AG04450 (cell line): ENCODE measurements at regions of chr9 and their contacts with region 1.

Region 1: DNA sequence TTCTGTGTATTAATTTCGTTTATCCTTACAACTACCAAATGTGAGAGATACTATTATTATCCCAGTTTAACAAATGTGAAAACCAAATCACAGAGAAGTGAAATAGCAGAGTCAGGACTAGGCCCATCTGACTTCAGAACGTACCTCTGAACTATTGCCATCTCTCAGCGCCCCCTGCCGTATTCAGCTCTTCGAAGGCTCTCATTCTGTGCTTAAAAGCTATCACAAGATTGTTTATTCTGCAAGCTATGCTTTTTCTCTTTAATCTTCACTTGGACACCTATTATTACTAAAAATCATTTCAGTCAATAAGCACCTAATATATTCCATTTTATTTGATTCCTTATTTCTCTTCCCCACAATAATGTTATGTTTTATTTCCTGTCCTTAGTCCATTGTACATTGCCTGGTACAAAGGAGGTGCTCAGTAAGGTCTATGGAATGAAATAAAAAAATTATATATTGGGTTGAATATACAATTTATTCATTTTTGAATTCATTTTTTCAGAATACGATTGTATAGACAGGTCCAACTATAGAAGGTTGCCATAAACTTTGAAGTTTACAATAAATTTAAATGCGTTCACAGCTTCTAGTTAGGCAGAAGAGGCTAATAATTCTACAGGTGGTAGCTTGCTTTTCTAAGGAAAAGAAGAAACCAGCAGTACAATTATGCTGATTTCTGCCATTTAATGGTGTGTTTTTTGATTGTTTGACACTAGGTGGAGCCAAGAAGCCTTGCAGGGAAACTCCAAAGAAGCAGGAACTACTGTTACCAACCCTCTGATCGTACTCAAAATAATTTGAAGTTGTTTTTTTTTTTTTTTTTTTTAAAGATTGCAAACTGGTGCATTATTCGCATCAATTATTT is 202.2 kb upstream of the DMRTA1 start:
- DNase-seq: no peak
- H3K4me3 ChIP-seq: no peak overlapping the region
- H3K27ac ChIP-seq: no peak overlapping the region
- H3K27me3 ChIP-seq: no peaks in the 10 kb centered on the region
- CTCF ChIP-seq: peak; percentile 74

Region 2: GRCh38 chr9:21968331-21969010 is 275.9 kb before region 1 on chr9:
- CTCF ChIA-PET with region 1: interaction called, 11 read pairs
- POLR2A ChIA-PET with region 1: no interaction called
- DNase-seq: no peak
- H3K4me3 ChIP-seq: 0 out of 2 replicates have a peak overlapping the region, but pooled peaks have one; percentile 25
- H3K27ac ChIP-seq: no peak overlapping the region
- H3K27me3 ChIP-seq: peaks cover 57% of the 10 kb centered on the region
- CTCF ChIP-seq: no peak

Region 3: GRCh38 chr9:22030101-22030598 is 214.2 kb before region 1 on chr9:
- CTCF ChIA-PET with region 1: interaction called, 19 read pairs
- POLR2A ChIA-PET with region 1: no interaction called
- DNase-seq: no peak
- H3K4me3 ChIP-seq: no peak overlapping the region
- H3K27ac ChIP-seq: peak overlapping the region; percentile 11
- H3K27me3 ChIP-seq: no peaks in the 10 kb centered on the region
- CTCF ChIP-seq: no peak

Region 4: GRCh38 chr9:22105005-22105722 is 139.2 kb before region 1 on chr9:
- CTCF ChIA-PET with region 1: interaction called, 11 read pairs
- POLR2A ChIA-PET with region 1: no interaction called
- DNase-seq: no peak
- H3K4me3 ChIP-seq: no peak overlapping the region
- H3K27ac ChIP-seq: no peak overlapping the region
- H3K27me3 ChIP-seq: no peaks in the 10 kb centered on the region
- CTCF ChIP-seq: no peak

Region 5: DNA sequence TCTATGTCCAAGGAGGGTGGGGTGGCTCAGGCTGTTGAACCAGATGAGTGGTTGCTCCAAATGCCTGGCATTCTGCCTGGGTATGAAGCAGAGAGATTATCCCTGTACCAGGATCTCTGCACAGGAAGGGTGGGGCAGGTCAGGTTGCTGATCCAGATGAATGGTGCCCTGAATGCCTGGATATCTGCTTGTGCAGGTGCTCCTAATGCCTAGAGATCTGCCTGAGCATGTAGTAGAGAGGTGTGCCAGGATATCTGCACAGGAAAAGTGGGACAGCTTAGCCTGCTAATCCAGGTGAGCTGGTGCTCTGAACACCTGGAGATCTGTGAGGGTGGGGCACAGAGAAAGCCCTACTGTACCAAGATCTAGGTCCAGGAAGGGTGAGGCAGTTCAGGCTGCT is 12.7 kb after region 1 on chr9:
- CTCF ChIA-PET with region 1: interaction called, 12 read pairs
- POLR2A ChIA-PET with region 1: no interaction called
- DNase-seq: no peak
- H3K4me3 ChIP-seq: no peak overlapping the region
- H3K27ac ChIP-seq: no peak overlapping the region
- H3K27me3 ChIP-seq: peaks cover 4% of the 10 kb centered on the region
- CTCF ChIP-seq: no peak

Region 6: DNA sequence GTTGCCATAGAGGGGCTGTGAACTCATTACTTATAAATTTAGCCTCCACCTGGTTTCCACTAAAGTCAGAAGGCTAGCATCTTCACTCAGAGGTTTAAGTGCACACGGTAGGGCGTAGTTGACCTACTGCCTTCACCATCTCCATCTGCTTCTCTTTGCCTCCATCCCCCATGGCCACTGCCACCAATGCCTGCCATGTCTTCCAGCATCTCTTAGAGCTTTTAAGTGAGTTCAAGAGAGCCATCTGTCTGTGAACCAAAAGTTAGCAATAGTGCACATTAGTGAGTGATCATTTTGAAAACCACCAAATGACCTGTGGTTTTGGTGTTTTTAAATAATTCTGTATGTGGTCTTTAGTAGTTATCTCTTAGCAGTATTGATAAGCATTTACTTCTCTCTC is 304.2 kb after region 1 on chr9:
- CTCF ChIA-PET with region 1: no interaction called
- POLR2A ChIA-PET with region 1: no interaction called
- DNase-seq: no peak
- H3K4me3 ChIP-seq: no peak overlapping the region
- H3K27ac ChIP-seq: no peak overlapping the region
- H3K27me3 ChIP-seq: no peaks in the 10 kb centered on the region
- CTCF ChIP-seq: no peak